ENCODE measurements at regions of chr4 and their contacts with region 1.

Region 1: GRCh38 chr4:112523764-112524505 is 8.0 kb upstream of the NEUROG2 start:
- DNase-seq: peak; percentile 87
- H3K4me3 Mint-ChIP-seq: peak overlapping the region; percentile 68
- H3K27ac Mint-ChIP-seq: no peak overlapping the region
- H3K4me1 Mint-ChIP-seq: no peaks in the 10 kb centered on the region
- H3K27me3 Mint-ChIP-seq: peaks cover 29% of the 10 kb centered on the region
- CTCF ChIP-seq: peak; percentile 67

Region 2: GRCh38 chr4:111546881-111547280 is 977.1 kb before region 1 on chr4:
- CTCF ChIA-PET with region 1: no interaction called
- intact Hi-C with region 1: no loop called
- DNase-seq: no peak
- H3K4me3 Mint-ChIP-seq: no peak overlapping the region
- H3K27ac Mint-ChIP-seq: no peak overlapping the region
- H3K4me1 Mint-ChIP-seq: no peaks in the 10 kb centered on the region
- H3K27me3 Mint-ChIP-seq: no peaks in the 10 kb centered on the region
- CTCF ChIP-seq: no peak

Region 3: GRCh38 chr4:112060212-112060611 is 463.7 kb before region 1 on chr4:
- CTCF ChIA-PET with region 1: no interaction called
- intact Hi-C with region 1: loop called (anchors 10 kb)
- DNase-seq: peak; percentile 9
- H3K4me3 Mint-ChIP-seq: no peak overlapping the region
- H3K27ac Mint-ChIP-seq: no peak overlapping the region
- H3K4me1 Mint-ChIP-seq: no peaks in the 10 kb centered on the region
- H3K27me3 Mint-ChIP-seq: no peaks in the 10 kb centered on the region
- CTCF ChIP-seq: no peak

Region 4: GRCh38 chr4:112099701-112100297 is 424.1 kb before region 1 on chr4:
- CTCF ChIA-PET with region 1: no interaction called
- intact Hi-C with region 1: loop called (anchors 5 kb)
- DNase-seq: no peak
- H3K4me3 Mint-ChIP-seq: no peak overlapping the region
- H3K27ac Mint-ChIP-seq: no peak overlapping the region
- H3K4me1 Mint-ChIP-seq: peaks cover 12% of the 10 kb centered on the region
- H3K27me3 Mint-ChIP-seq: no peaks in the 10 kb centered on the region
- CTCF ChIP-seq: no peak

Region 5: DNA sequence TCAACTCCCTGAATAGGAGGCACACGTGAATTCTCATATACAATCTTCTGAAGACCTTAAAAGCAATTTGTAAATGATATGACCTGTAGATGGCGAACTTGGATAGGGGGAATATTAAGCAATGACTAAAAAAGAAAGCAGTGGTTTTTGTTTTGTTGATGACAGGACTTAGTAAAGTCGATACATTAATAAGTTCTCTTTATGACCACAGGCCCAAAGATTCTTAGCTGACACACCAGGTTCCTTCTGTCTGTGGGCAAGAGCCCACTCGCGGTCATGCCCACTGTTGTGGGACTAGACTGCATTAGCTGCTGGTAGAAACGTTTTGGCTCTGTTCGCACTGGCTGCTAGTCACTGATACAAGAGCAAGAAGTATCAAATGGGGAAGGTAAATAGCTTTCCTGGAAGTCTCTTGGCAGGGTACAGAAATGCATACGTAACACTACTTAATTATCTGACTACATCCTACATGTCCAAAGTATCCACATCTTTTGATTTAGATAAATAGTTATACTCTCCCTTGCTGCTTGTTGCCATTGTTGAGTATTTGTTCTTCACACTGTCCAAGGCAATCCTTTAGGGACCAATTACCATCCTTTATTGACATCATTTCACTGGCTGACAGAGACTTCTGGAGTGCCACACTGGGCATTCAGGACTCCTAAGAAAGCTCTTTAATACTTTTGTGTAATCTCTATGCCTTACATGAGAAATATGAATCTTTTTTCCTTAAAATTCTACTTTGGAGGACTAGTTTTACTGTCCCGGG is 195.8 kb before region 1 on chr4:
- CTCF ChIA-PET with region 1: no interaction called
- intact Hi-C with region 1: loop called (anchors 1 kb)
- DNase-seq: no peak
- H3K4me3 Mint-ChIP-seq: no peak overlapping the region
- H3K27ac Mint-ChIP-seq: no peak overlapping the region
- H3K4me1 Mint-ChIP-seq: no peaks in the 10 kb centered on the region
- H3K27me3 Mint-ChIP-seq: no peaks in the 10 kb centered on the region
- CTCF ChIP-seq: no peak

Region 6: GRCh38 chr4:112436955-112437354 is 87.0 kb before region 1 on chr4:
- CTCF ChIA-PET with region 1: no interaction called
- intact Hi-C with region 1: no loop called
- DNase-seq: no peak
- H3K4me3 Mint-ChIP-seq: no peak overlapping the region
- H3K27ac Mint-ChIP-seq: no peak overlapping the region
- H3K4me1 Mint-ChIP-seq: no peaks in the 10 kb centered on the region
- H3K27me3 Mint-ChIP-seq: no peaks in the 10 kb centered on the region
- CTCF ChIP-seq: no peak

Region 7: DNA sequence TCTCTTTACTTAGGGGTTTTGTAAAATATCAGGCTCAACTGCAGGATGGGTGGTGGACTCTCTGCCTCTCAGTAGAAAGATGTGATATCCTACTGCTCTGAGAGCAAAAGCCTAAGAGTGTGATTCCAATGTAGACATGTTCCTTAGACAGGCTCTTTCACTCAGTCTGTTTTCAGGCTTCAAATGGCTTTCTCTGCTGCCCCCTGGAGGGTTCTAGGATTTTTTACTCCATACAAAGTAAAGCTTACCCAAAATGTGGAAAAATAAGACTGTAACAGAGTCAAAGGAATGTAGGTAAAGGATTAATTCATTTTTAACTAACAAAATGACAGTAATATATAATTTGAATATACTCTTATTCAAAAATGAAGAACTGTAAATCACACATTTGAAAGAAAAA is 80.7 kb after region 1 on chr4:
- CTCF ChIA-PET with region 1: no interaction called
- intact Hi-C with region 1: loop called (anchors 5 kb)
- DNase-seq: peak; percentile 42
- H3K4me3 Mint-ChIP-seq: no peak overlapping the region
- H3K27ac Mint-ChIP-seq: no peak overlapping the region
- H3K4me1 Mint-ChIP-seq: no peaks in the 10 kb centered on the region
- H3K27me3 Mint-ChIP-seq: no peaks in the 10 kb centered on the region
- CTCF ChIP-seq: peak; percentile 33

Measured in Calu3 (cell line).